Astrocyte of the cerebellum (primary cell): ENCODE measurements at regions of chr9 and their contacts with region 1.

Region 1: GRCh38 chr9:18250053-18250452 is 223.9 kb upstream of the ADAMTSL1 start:
- DNase-seq: no peak
- H3K4me3 ChIP-seq: no peak overlapping the region
- CTCF ChIP-seq: no peak

Region 2: DNA sequence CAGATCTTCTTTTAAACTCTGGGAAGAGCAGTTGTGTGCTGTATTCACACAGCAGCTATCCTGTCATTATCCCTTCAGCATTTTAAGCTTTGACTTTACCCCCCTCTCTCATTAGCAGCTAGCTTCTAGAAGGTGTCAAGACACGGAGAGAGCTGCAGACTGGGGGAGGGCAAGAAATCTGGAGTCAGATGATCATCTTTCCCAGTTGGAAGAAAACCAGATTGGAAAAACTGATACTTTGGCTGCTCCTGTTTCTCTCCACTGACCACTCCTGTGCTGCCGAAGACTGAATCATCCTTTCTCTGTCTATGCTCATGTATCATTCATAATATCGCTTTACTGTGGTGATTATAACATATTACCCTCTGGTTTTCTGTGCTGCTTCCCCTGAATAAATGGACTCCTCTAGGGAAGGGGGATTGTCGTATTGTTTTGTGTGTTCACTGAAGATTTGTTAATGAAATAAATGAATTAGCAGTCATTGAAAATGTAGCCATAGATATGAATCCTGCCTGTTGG is 596.0 kb before region 1 on chr9:
- in situ Hi-C with region 1: no loop called
- DNase-seq: no peak
- H3K4me3 ChIP-seq: no peak overlapping the region
- CTCF ChIP-seq: no peak

Region 3: GRCh38 chr9:18163146-18163545 is 86.9 kb before region 1 on chr9:
- in situ Hi-C with region 1: no loop called
- DNase-seq: no peak
- H3K4me3 ChIP-seq: no peak overlapping the region
- CTCF ChIP-seq: no peak

Region 4: DNA sequence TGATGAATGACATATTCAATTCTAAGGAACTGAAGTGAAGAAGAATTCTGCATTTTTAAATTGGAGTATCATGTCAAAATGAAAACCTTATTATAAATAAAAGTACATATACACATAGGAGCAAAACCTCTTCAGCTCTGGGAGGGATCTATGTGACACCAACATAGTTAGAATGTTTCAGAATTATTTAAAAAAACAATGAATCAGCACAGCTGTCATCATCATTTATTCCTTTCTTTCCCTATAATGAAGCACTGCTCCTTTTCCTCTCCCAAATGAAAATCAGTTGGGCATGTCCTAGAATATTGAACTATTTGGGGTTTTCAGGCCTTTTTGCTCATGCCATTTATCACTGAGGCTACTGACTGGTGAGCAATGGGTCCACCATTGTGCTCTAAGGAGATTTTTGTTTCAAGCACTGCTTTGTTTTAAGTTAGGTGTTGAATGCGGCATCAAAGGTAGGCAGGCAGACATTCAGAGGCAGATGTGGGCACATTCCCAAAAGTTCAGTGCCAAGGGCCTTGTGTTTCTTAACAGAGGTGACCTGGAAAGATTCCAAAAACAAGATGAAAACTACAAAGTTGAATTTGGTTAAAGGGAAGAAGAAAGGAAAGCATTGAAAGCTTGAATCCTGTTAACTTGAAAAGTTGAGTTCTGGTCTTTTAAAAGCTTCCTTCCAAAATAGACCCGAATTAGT is 97.5 kb after region 1 on chr9:
- in situ Hi-C with region 1: loop called (anchors 5 kb)
- DNase-seq: no peak
- H3K4me3 ChIP-seq: no peak overlapping the region
- CTCF ChIP-seq: no peak